AG04449 (cell line): ENCODE measurements at regions of chr2 and their contacts with region 1.

Region 1: DNA sequence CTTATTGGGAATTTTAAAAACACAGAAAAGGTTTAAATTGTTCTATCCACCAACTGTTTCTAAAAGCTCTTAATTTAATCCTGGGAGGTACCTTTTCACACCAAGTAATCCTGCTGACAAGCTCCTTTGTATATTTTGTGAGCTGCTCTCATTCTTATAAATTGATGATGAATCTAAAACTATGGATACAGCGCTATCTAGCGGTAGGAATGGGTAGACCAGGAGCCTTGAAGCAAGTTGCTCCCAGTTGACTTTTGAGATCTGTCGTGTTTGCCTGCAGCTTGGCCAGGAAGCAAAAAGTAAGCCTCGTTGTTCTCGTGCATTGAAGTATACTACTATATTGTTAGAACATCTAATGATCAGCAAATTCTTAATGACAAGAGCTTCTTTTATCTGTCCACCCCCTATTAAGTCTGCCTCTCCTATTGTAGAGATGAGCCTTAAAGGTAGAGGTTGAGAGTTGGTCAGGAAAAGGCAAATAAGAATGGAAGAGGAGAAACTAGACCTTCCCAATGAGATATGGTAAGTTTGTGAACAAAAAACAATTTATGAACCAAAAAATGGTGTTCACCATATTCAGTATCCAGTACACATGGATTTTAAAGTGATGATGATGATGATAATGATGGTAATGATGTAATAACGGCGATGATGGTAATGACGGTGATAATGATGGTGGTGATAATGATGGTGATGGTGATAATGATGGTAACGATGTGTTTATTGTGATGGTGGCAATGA is 212.0 kb upstream of the NCKAP5 start:
- DNase-seq: no peak
- H3K4me3 ChIP-seq: no peak overlapping the region
- CTCF ChIP-seq: peak; percentile 64

Region 2: GRCh38 chr2:133561045-133561852 is 219.0 kb before region 1 on chr2:
- CTCF ChIA-PET with region 1: interaction called, 37 read pairs
- POLR2A ChIA-PET with region 1: no interaction called
- DNase-seq: peak; percentile 57
- H3K4me3 ChIP-seq: no peak overlapping the region
- CTCF ChIP-seq: peak; percentile 67

Region 3: GRCh38 chr2:133568172-133568571 is 212.1 kb before region 1 on chr2 and contains the start of gene NCKAP5:
- CTCF ChIA-PET with region 1: interaction called, 37 read pairs
- POLR2A ChIA-PET with region 1: no interaction called
- DNase-seq: no peak
- H3K4me3 ChIP-seq: peak within 1 kb of the TSS; percentile 52
- CTCF ChIP-seq: no peak

Region 4: DNA sequence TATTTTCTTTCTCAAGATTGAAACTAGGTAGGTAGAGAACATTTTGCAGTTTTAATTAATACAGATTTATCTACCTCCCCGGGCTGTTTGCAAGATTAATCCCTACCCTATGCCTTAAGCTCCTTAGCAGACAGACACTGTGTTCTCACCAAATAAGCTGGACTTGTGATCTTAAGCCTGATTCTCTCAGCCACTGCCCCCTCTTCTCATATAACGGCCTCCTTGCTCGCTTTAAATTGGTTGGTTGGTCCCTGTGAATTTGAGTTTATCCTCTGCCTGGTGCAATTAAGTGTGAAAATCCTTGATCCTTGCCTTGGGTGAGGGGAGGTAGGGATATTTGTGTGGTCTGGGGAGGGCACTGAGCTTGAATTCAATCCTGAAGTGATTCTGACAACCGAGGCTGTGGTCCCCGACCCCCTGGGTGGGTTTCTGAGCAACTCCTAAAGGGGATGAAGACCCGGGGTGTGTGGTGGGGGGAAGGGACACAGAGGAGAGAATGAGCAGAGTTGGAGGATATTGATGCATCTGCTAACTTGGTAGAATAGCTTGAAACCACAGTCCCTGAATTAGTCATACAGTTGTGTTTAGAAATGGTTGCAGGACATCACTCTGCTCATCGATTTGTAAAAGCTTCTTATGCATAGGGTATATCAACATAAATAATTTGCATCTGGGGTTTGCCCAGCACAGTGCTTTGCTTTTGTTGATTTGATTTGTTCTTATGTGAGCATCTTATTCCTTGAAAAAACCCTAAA is 175.1 kb before region 1 on chr2:
- CTCF ChIA-PET with region 1: interaction called, 11 read pairs
- POLR2A ChIA-PET with region 1: no interaction called
- DNase-seq: no peak
- H3K4me3 ChIP-seq: no peak overlapping the region
- CTCF ChIP-seq: no peak

Region 5: GRCh38 chr2:133755480-133756300 is 24.6 kb before region 1 on chr2:
- CTCF ChIA-PET with region 1: interaction called, 14 read pairs
- POLR2A ChIA-PET with region 1: no interaction called
- DNase-seq: peak; percentile 100
- H3K4me3 ChIP-seq: no peak overlapping the region
- CTCF ChIP-seq: no peak

Region 6: GRCh38 chr2:133765658-133766057 is 14.6 kb before region 1 on chr2:
- CTCF ChIA-PET with region 1: interaction called, 50 read pairs
- POLR2A ChIA-PET with region 1: no interaction called
- DNase-seq: no peak
- H3K4me3 ChIP-seq: no peak overlapping the region
- CTCF ChIP-seq: no peak

Region 7: DNA sequence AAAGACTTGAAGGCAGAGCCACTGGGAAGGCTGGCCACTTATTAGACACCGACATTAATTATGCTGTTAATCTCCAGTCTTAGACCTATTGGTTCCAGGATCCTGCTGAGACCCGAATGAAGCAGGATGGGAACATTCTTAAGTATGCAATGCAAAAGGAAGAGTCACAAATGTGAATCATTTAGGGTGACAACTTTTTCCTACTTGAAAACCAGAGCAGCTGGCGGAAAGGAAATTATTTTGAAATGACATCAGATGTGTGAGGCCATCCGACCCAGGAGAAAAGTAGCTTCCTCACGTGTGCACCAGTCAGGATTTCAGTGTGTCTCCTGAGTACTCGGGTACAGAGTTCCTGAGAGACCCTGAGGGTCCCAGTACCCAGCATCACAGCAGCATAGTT is 10.9 kb after region 1 on chr2:
- CTCF ChIA-PET with region 1: interaction called, 32 read pairs
- POLR2A ChIA-PET with region 1: no interaction called
- DNase-seq: peak; percentile 44
- H3K4me3 ChIP-seq: no peak overlapping the region
- CTCF ChIP-seq: no peak